ENCODE measurements at regions of chr1 and their contacts with region 1.

Region 1: GRCh38 chr1:37574834-37575480 is 18.2 kb downstream of the DNALI1 start:
- DNase-seq: peak; percentile 26
- ATAC-seq: peak; percentile 56
- H3K4me3 Mint-ChIP-seq: no peak overlapping the region
- H3K27ac Mint-ChIP-seq: peak overlapping the region; percentile 90
- H3K4me1 Mint-ChIP-seq: peaks cover 55% of the 10 kb centered on the region
- H3K27me3 Mint-ChIP-seq: no peaks in the 10 kb centered on the region

Region 2: GRCh38 chr1:37588939-37589338 is 14.0 kb after region 1 on chr1:
- CTCF ChIA-PET with region 1: interaction called, 4 read pairs
- POLR2A ChIA-PET with region 1: interaction called, 6 read pairs
- intact Hi-C with region 1: loop called (anchors 1 to 2 kb)
- DNase-seq: no peak
- ATAC-seq: peak; percentile 81
- H3K4me3 Mint-ChIP-seq: no peak overlapping the region
- H3K27ac Mint-ChIP-seq: peak overlapping the region; percentile 47
- H3K4me1 Mint-ChIP-seq: peaks cover 43% of the 10 kb centered on the region
- H3K27me3 Mint-ChIP-seq: no peaks in the 10 kb centered on the region